Activated CD4-positive, alpha-beta memory T cell treated with anti-CD3 and anti-CD28 coated beads for 36 hours (primary cell): ENCODE measurements at regions of chr1 and their contacts with region 1.

Region 1: GRCh38 chr1:168342572-168343280 is 62.0 kb downstream of the TBX19 start:
- DNase-seq: peak; percentile 92
- H3K4me3 Mint-ChIP-seq: no peak overlapping the region
- H3K27ac Mint-ChIP-seq: peak overlapping the region; percentile 42
- H3K4me1 Mint-ChIP-seq: peaks cover 35% of the 10 kb centered on the region
- H3K27me3 Mint-ChIP-seq: no peaks in the 10 kb centered on the region

Region 2: GRCh38 chr1:168234846-168235547 is 107.7 kb before region 1 on chr1:
- CTCF ChIA-PET with region 1: interaction called, 22 read pairs
- POLR2A ChIA-PET with region 1: no interaction called
- intact Hi-C with region 1: no loop called
- DNase-seq: peak; percentile 63
- H3K4me3 Mint-ChIP-seq: no peak overlapping the region
- H3K27ac Mint-ChIP-seq: peak overlapping the region; percentile 79
- H3K4me1 Mint-ChIP-seq: peaks cover 61% of the 10 kb centered on the region
- H3K27me3 Mint-ChIP-seq: no peaks in the 10 kb centered on the region

Region 3: GRCh38 chr1:168379110-168379860 is 36.6 kb after region 1 on chr1:
- CTCF ChIA-PET with region 1: interaction called, 11 read pairs
- POLR2A ChIA-PET with region 1: no interaction called
- intact Hi-C with region 1: no loop called
- DNase-seq: no peak
- H3K4me3 Mint-ChIP-seq: no peak overlapping the region
- H3K27ac Mint-ChIP-seq: no peak overlapping the region
- H3K4me1 Mint-ChIP-seq: no peaks in the 10 kb centered on the region
- H3K27me3 Mint-ChIP-seq: no peaks in the 10 kb centered on the region

Region 4: DNA sequence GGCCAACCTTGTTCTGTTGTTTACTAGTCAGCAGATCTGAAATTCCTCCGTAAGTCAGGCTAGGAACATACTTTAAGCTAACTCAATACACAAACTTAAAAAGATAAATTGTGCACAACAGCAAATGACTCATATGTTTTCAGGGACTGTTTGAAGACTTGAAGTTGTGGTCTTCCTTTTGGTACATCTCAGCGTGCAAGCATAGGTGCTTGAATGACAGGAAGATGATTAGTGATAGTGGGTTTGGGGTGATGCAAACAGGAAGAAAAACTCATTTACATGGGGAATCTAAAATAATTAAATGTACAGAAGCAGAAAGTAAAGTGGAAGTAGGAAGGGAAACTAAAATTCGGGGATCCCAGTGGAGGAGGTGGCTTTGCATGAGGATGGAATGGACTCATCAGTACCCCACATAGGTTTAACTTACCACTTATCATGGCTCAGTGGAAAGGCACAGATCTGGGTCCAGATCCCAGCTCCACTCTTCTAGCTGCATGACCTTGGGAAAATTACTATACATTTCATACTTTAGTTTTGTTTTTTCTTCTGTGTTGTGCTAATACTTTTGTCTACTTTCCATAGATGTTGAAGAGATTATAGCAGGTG is 78.8 kb after region 1 on chr1:
- CTCF ChIA-PET with region 1: interaction called, 35 read pairs
- POLR2A ChIA-PET with region 1: interaction called, 3 read pairs
- intact Hi-C with region 1: loop called (anchors 1 kb)
- DNase-seq: peak; percentile 29
- H3K4me3 Mint-ChIP-seq: peak overlapping the region; percentile 49
- H3K27ac Mint-ChIP-seq: peak overlapping the region; percentile 78
- H3K4me1 Mint-ChIP-seq: peaks cover 33% of the 10 kb centered on the region
- H3K27me3 Mint-ChIP-seq: no peaks in the 10 kb centered on the region

Region 5: GRCh38 chr1:168498159-168498631 is 155.5 kb after region 1 on chr1:
- CTCF ChIA-PET with region 1: no interaction called
- POLR2A ChIA-PET with region 1: no interaction called
- intact Hi-C with region 1: no loop called
- DNase-seq: no peak
- H3K4me3 Mint-ChIP-seq: no peak overlapping the region
- H3K27ac Mint-ChIP-seq: no peak overlapping the region
- H3K4me1 Mint-ChIP-seq: peaks cover 5% of the 10 kb centered on the region
- H3K27me3 Mint-ChIP-seq: no peaks in the 10 kb centered on the region

Region 6: GRCh38 chr1:168535536-168535935 is 192.8 kb after region 1 on chr1:
- CTCF ChIA-PET with region 1: interaction called, 6 read pairs
- POLR2A ChIA-PET with region 1: no interaction called
- intact Hi-C with region 1: loop called (anchors 5 kb)
- DNase-seq: no peak
- H3K4me3 Mint-ChIP-seq: no peak overlapping the region
- H3K27ac Mint-ChIP-seq: peak overlapping the region; percentile 25
- H3K4me1 Mint-ChIP-seq: peaks cover 64% of the 10 kb centered on the region
- H3K27me3 Mint-ChIP-seq: no peaks in the 10 kb centered on the region

Region 7: DNA sequence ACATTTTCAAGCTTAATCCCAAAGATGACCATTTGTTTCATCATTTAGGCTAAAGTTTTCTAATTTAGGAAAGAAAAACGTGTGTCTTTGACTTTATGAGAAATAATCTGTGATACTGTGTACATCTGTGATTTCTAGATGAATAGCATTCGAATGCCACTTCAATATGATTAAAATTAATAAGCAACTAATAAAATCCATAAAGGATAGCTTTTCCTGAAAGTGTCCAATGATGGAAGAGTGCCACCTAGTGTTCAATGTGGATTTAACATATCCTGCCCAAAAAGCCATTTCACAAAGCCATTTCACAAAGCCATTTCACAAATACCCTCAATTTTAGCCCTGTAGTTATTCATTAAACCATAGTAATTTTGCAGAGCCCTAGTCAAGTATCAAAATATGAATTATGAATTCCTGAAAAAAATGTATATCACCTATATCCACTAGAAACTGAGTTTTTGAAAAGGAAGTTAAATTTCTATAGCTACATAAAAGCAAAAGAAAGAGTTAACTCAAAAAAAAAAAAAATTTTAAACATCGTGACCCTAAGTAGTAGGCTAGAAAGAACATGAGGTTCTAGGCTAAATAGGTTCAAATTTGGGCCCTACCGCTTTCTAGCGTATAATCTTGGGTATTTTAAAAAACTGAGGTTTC is 1005.8 kb after region 1 on chr1:
- CTCF ChIA-PET with region 1: interaction called, 35 read pairs
- POLR2A ChIA-PET with region 1: no interaction called
- intact Hi-C with region 1: loop called (anchors 5 kb)
- DNase-seq: no peak
- H3K4me3 Mint-ChIP-seq: no peak overlapping the region
- H3K27ac Mint-ChIP-seq: no peak overlapping the region
- H3K4me1 Mint-ChIP-seq: peaks cover 6% of the 10 kb centered on the region
- H3K27me3 Mint-ChIP-seq: no peaks in the 10 kb centered on the region